ENCODE measurements at regions of chr16 and their contacts with region 1.

Region 1: GRCh38 chr16:49855280-49855821 is 561 bp downstream of the ZNF423 start:
- DNase-seq: peak; percentile 90 to 92
- ATAC-seq: peak; percentile 56 to 83 (median 72)
- H3K4me3 ChIP-seq: peak overlapping the region; percentile 40 to 84 (median 70)
- H3K27ac ChIP-seq: peak overlapping the region; percentile 85 to 99 (median 93)
- H3K4me1 ChIP-seq: peaks cover 0 to 64% (median 51%) of the 10 kb centered on the region in 9 donors
- H3K27me3 ChIP-seq: peaks cover 0 to 64% (median 0%) of the 10 kb centered on the region in 7 donors
- CTCF ChIP-seq: no peak

Region 2: GRCh38 chr16:49491771-49492761 is 363.3 kb before region 1 on chr16:
- intact Hi-C with region 1: loop called in 5 of 10 experiments (anchors 5 to 10 kb)
- DNase-seq: peak; percentile 51 to 63
- ATAC-seq: peak; percentile 78 to 92 (median 86)
- H3K4me3 ChIP-seq: peak overlapping the region in 9 of 10 donors; percentile 26 to 57 (median 45)
- H3K27ac ChIP-seq: peak overlapping the region in 7 of 10 donors; percentile 38 to 72 (median 59)
- H3K4me1 ChIP-seq: peaks cover 2 to 17% (median 13%) of the 10 kb centered on the region in 9 donors
- H3K27me3 ChIP-seq: peaks cover 0 to 3% (median 0%) of the 10 kb centered on the region in 7 donors
- CTCF ChIP-seq: peak; percentile 91 to 99 (median 98)

Region 3: GRCh38 chr16:49617016-49617629 is 238.2 kb before region 1 on chr16:
- intact Hi-C with region 1: loop called in 3 of 10 experiments (anchors 10 kb)
- DNase-seq: no peak
- ATAC-seq: no peak
- H3K4me3 ChIP-seq: no peak overlapping the region
- H3K27ac ChIP-seq: no peak overlapping the region
- H3K4me1 ChIP-seq: peaks cover 3 to 29% (median 21%) of the 10 kb centered on the region in 9 donors
- H3K27me3 ChIP-seq: no peaks in the 10 kb centered on the region
- CTCF ChIP-seq: no peak

Region 4: GRCh38 chr16:49701789-49702494 is 153.4 kb before region 1 on chr16:
- intact Hi-C with region 1: loop called in 1 of 10 experiments (anchors 2 kb)
- DNase-seq: peak; percentile 53 to 70
- ATAC-seq: peak; percentile 36 to 80 (median 58)
- H3K4me3 ChIP-seq: peak overlapping the region in 1 of 10 donors; percentile 14
- H3K27ac ChIP-seq: peak overlapping the region in 5 of 10 donors; percentile 1 to 81 (median 32)
- H3K4me1 ChIP-seq: peaks cover 18 to 65% (median 41%) of the 10 kb centered on the region in 9 donors
- H3K27me3 ChIP-seq: peaks cover 0 to 23% (median 0%) of the 10 kb centered on the region in 7 donors
- CTCF ChIP-seq: no peak

Region 5: GRCh38 chr16:49776085-49776595 is 79.2 kb before region 1 on chr16:
- intact Hi-C with region 1: loop called in 3 of 10 experiments (anchors 5 kb)
- DNase-seq: peak; percentile 60 to 62
- ATAC-seq: peak; percentile 80 to 92 (median 87)
- H3K4me3 ChIP-seq: peak overlapping the region in 4 of 10 donors; percentile 16 to 24 (median 20)
- H3K27ac ChIP-seq: peak overlapping the region in 9 of 10 donors; percentile 36 to 78 (median 70)
- H3K4me1 ChIP-seq: peaks cover 8 to 72% (median 57%) of the 10 kb centered on the region in 9 donors
- H3K27me3 ChIP-seq: no peaks in the 10 kb centered on the region
- CTCF ChIP-seq: no peak

Measured in heart right ventricle (tissue), 16 donors.